PC-9 (cell line): ENCODE measurements at regions of chr3 and their contacts with region 1.

Region 1: DNA sequence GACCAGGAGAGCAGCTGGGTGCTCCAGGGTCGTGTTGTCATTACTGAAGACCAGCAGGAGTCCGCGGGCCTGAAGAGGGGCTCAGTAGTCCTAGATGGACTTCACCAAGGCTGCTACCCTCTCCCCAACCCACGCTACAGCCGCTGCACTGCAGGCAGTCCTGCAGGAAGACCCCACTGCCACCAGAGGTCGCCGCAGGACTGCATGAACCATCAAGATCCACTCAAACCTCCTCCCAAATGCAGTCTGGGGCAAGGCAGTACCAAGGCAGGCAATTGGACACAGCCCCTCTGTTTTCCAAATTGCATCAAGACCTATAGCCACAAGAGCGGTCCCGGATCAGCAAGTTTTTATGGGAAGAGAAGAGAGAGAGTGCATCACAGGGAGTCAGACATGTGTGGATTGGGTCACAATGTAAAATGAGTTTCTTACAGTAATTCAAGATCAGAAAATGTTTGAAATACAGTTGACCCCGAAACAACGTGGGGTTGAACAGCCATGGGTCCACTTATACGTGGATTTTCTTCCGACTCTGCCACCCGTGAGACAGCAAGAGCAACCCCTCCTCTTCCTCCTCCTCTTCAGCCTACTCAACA is 46.7 kb downstream of the DZIP1L start:
- DNase-seq: peak in 1 of 2 experiments; percentile 72
- H3K4me3 ChIP-seq: no peak overlapping the region
- H3K27ac ChIP-seq: no peak overlapping the region
- H3K4me1 ChIP-seq: no peaks in the 10 kb centered on the region
- H3K27me3 ChIP-seq: no peaks in the 10 kb centered on the region
- CTCF ChIP-seq: peak; percentile 97

Region 2: DNA sequence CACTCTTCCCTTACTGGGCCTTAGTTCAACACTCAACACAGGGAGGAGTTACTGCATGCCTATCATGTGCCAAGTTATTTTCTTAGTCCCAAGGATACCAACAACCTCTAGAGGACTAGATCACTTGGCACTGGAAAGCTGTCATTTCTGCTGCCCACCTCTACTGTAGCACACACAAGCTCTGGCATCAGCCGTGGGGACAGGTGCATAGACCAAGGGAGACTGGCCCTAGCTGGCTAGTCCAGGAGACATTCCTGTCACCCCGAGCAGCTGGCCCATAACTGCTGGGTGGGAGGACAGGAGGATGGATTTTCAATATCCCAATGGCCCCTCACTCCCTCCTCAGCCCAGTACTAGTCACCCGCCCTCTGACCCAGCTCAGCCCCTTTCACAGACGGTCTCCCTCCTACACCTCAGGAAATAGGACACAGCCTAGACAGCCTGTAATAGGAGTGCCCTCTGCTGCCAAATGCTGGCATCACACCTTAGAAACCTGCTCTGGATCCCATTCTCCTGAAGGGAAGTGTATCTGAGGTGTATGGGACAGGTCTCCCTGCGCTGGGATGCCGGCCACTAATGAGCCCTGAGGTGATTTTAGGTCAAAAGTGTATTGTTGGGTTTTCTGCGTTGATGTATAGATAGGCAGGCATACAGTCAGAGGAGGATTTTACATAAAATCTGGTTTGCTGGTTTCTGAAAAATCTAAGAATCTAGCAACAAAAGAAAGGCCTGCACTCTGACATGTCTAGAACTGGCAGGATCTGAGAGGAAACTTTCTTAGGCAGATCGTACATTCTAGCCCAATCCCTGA is 50.1 kb after region 1 on chr3:
- CTCF ChIA-PET with region 1: interaction called, 7 read pairs
- POLR2A ChIA-PET with region 1: no interaction called
- intact Hi-C with region 1: loop called (anchors 1 kb)
- DNase-seq: peak; percentile 56 to 79
- H3K4me3 ChIP-seq: no peak overlapping the region
- H3K27ac ChIP-seq: no peak overlapping the region
- H3K4me1 ChIP-seq: peaks cover 9% of the 10 kb centered on the region
- H3K27me3 ChIP-seq: no peaks in the 10 kb centered on the region
- CTCF ChIP-seq: peak; percentile 91

Region 3: GRCh38 chr3:138426226-138426625 is 357.5 kb after region 1 on chr3:
- CTCF ChIA-PET with region 1: no interaction called
- POLR2A ChIA-PET with region 1: no interaction called
- intact Hi-C with region 1: loop called (anchors 10 kb)
- DNase-seq: peak in 1 of 2 experiments; percentile 42
- H3K4me3 ChIP-seq: no peak overlapping the region
- H3K27ac ChIP-seq: no peak overlapping the region
- H3K4me1 ChIP-seq: no peaks in the 10 kb centered on the region
- H3K27me3 ChIP-seq: no peaks in the 10 kb centered on the region
- CTCF ChIP-seq: peak; percentile 39